ENCODE measurements at regions of chr3 and their contacts with region 1.

Region 1: DNA sequence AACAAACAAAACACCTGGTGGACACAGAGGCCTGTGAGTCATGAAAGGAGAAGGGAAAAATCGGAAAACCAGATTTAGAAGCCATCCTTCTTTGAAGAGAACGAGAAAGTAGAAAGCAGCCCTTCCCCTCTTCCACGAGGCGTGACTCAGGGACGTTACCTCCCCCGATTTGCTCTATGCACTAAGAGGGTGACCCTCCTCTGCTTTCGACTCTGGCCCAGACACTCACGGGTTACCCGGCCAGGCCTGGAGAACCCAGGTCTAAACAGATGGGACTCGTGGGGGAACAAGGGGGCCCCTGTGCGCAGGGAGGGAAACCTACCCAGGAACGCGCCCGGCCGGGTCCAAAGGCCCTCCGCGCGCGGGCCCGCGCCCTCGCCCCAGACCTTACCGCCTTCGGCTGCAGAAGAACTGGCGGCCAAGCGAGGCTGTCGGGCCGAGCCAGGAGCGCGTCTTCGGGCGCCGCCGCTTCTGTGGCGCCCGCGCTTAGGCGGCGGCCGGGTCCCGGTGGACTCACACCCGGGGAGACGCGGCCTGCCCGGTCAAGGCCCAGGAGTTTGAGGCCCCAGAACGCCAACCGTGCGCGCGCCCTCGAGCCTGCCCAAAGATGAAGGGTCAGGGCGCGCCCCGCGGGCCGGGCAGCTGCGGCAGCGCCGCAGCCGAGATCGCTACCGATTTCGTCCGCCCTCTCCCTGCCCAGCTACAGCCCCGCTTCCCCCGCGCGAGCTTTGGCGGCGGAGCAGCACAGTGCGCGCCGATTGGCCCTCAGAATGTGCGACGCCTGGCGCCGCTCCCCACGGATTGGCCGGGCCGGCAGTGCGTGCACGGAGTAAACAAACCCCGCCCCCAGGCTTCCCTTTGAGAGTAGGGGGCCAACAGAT is at the start of gene TFDP2:
- DNase-seq: peak; percentile 96
- total RNA-seq, gene TFDP2: 33.2 to 37.9 TPM

Region 2: GRCh38 chr3:142019794-142020320 is 129.2 kb before region 1 on chr3:
- intact Hi-C with region 1: no loop called
- DNase-seq: no peak

Region 3: DNA sequence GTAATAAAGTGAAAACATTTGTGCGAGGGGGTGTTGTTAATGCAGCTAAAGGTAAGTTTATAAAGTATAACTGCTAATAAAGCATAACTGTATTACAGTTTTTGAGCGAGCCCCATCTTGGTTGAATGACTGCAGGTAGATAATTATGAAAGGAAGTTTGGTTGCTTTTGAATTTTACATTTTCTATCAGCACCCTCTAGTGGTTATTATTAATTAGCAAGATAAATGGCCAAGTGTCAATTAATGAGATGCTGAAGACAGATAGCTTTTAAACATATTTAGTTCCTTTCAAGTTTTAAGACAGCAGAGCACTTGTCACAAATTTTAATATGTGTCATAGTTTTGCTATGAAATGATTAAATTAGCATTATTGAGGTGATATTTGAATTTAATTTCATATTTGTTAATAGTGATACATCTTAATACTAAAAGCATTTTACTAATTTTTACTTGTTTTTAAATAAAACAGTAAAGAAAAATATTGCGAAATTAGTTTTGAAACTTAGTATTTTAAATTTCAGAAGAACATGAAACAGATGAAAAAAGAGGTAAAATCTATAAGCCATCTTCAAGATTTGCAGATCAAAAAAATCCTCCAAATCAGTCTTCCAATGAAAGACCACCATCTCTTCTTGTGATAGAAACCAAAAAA is 867.4 kb after region 1 on chr3:
- intact Hi-C with region 1: loop called in 1 of 2 experiments (anchors 5 kb)
- DNase-seq: no peak

Measured in posterior vena cava (tissue), 2 donors.